HCT116 (cell line): ENCODE measurements at regions of chr6 and their contacts with region 1.

Region 1: DNA sequence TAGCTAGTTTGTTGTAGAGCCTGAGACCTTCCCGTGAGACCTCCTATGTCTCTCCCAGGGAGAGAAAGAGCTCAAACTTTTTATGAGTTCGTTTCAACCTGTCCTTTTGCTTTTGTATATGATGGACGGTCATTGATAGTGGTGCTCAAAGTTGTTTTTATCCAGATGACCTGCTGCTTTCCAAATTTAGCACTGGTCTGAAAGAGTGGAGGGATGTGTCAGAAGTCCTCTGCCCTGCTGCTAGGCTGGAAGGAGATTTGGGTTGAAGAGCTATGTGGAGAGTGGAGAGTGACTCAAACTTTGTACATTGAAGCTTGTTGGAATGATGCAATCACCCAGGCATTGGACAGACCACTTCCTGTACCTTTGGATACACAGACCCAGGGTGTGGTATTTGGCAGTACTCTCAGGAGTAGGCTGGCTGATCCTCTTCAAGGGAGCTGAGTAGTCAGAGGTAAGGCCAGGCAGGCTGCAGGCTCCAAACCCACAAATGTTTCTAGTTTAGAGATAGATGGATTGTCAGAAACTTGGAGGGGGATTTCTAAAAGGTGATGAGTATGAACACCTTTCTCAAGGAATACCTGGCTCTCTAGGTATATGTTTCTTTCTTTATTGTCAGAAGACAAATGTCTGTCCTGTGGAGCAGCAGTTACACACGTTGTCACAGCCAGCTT is 49.4 kb upstream of the RREB1 start:
- DNase-seq: peak; percentile 97
- ATAC-seq: peak; percentile 93
- H3K4me3 ChIP-seq: peak overlapping the region in 1 of 2 experiments; percentile 27; a peak in 3 of 4 replicates
- H3K27ac ChIP-seq: peak overlapping the region; percentile 56
- H3K4me1 ChIP-seq: peaks cover 42 to 58% of the 10 kb centered on the region in 2 experiments
- H3K27me3 ChIP-seq: no peaks in the 10 kb centered on the region
- CTCF ChIP-seq: no peak
- POLR2A ChIP-seq: peak; percentile 43
- RAD21 ChIP-seq: peak; percentile 34; the same call in 1 of the 2 replicates

Region 2: DNA sequence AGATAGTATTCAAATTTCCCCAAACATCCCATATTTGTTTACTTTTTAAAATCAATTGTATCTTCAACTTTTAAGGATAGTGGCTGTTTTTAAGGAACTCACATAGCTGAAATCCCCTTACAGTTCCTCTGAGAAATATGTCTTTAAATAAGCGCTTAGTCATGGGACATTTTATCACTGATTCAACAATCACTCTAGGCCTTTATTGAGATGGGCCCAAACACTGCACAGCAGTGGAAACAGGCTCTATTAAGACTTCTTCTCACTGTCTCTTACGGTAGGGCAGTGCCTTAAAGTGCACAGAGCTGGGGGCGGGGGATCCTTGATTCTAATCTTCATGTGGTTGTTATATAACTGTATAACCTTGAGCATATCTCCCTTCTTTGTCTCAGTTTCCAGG is 10.4 kb before region 1 on chr6:
- CTCF ChIA-PET with region 1: no interaction called
- POLR2A ChIA-PET with region 1: interaction called, 13 read pairs
- RAD21 ChIA-PET with region 1: no interaction called
- intact Hi-C with region 1: no loop called
- DNase-seq: no peak
- ATAC-seq: no peak
- H3K4me3 ChIP-seq: no peak overlapping the region
- H3K27ac ChIP-seq: no peak overlapping the region
- H3K4me1 ChIP-seq: peaks cover 0 to 16% of the 10 kb centered on the region in 2 experiments; a peak in 1 of 4 replicates
- H3K27me3 ChIP-seq: no peaks in the 10 kb centered on the region
- CTCF ChIP-seq: no peak
- POLR2A ChIP-seq: no peak
- RAD21 ChIP-seq: no peak

Region 3: DNA sequence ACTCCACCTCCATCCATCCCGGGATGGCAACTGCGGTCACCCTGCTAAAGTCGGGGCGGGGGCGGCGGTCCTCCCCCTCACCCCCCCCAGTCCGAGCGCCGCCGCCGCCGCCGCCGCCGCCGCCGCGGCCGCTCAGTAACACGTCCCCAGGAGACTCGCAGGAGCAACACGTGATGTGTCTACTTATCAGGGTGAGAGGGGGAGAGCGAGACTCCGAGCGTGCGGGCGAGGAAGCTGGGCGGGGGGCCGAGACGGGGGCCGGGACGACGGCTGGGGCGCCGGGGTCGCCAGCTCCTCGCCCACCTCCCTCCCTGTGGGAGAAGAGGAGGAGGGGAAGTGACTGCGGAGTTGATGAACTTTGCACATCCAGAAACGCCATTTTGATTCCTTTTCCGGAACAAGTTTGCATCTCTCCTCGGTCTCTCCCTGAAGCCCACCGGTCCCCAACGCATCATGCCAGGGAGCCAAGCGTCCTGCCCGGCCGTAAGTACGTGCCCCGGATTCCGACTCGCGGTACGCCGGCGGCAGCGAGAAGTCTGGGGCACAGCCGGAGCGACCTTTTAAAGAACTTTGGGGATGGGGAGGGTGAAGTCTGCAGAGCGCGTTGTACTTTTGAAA is 49.3 kb after region 1 on chr6 and contains the start of gene RREB1:
- CTCF ChIA-PET with region 1: no interaction called
- POLR2A ChIA-PET with region 1: interaction called, 4 read pairs
- RAD21 ChIA-PET with region 1: no interaction called
- intact Hi-C with region 1: loop called (anchors 5 kb)
- DNase-seq: peak; percentile 15
- ATAC-seq: peak; percentile 70
- H3K4me3 ChIP-seq: peak within 1 kb of the TSS; percentile 90 to 95
- H3K27ac ChIP-seq: peak within 1 kb of the TSS; percentile 92
- H3K4me1 ChIP-seq: peaks cover 18 to 41% of the 10 kb centered on the region in 2 experiments
- H3K27me3 ChIP-seq: no peaks in the 10 kb centered on the region
- CTCF ChIP-seq: no peak
- POLR2A ChIP-seq: no peak
- RAD21 ChIP-seq: no peak
- total RNA-seq, gene RREB1: 47.9 TPM